ENCODE measurements at regions of chr6 and their contacts with region 1.

Region 1: GRCh38 chr6:149235130-149235561 is 82.4 kb upstream of the TAB2 start:
- DNase-seq: no peak
- H3K4me3 Mint-ChIP-seq: no peak overlapping the region
- H3K27ac Mint-ChIP-seq: peak overlapping the region; percentile 99
- H3K4me1 Mint-ChIP-seq: peaks cover 60% of the 10 kb centered on the region
- H3K27me3 Mint-ChIP-seq: no peaks in the 10 kb centered on the region

Region 2: DNA sequence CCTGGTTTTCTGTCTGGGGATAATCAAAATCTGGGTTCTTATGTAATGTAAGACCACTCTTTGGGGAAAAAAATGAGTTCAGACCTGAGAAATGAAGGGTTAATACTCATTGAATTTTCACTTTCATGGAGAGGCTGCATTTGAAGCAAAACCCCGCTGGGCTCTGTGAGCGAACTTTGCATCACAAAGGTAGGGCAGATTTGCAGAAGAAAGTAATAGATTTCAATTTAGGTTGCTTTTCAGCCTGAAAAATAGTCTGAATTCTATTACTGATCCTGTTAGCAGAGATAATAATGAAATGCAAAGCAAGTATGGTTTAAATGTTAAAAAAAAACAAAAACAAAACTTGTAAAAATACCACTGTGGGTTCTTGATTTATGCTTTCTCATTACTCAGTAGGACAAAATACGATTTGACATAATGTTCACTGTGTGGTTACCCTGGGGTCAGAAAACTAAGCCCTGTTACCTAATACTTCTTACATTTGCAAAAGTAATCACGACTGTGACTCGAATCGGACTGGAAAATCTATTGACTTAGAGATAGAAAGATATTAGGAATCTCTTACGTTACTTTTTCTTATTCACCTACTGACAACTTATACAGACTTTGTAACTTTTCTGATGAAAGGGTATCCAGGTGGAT is 416.1 kb before region 1 on chr6:
- intact Hi-C with region 1: no loop called
- DNase-seq: no peak
- H3K4me3 Mint-ChIP-seq: no peak overlapping the region
- H3K27ac Mint-ChIP-seq: no peak overlapping the region
- H3K4me1 Mint-ChIP-seq: no peaks in the 10 kb centered on the region
- H3K27me3 Mint-ChIP-seq: peaks cover 25% of the 10 kb centered on the region

Region 3: GRCh38 chr6:149094156-149094555 is 141.0 kb before region 1 on chr6:
- intact Hi-C with region 1: loop called (anchors 1 kb)
- DNase-seq: no peak
- H3K4me3 Mint-ChIP-seq: peak overlapping the region; percentile 50
- H3K27ac Mint-ChIP-seq: peak overlapping the region; percentile 84
- H3K4me1 Mint-ChIP-seq: peaks cover 63% of the 10 kb centered on the region
- H3K27me3 Mint-ChIP-seq: no peaks in the 10 kb centered on the region

Region 4: DNA sequence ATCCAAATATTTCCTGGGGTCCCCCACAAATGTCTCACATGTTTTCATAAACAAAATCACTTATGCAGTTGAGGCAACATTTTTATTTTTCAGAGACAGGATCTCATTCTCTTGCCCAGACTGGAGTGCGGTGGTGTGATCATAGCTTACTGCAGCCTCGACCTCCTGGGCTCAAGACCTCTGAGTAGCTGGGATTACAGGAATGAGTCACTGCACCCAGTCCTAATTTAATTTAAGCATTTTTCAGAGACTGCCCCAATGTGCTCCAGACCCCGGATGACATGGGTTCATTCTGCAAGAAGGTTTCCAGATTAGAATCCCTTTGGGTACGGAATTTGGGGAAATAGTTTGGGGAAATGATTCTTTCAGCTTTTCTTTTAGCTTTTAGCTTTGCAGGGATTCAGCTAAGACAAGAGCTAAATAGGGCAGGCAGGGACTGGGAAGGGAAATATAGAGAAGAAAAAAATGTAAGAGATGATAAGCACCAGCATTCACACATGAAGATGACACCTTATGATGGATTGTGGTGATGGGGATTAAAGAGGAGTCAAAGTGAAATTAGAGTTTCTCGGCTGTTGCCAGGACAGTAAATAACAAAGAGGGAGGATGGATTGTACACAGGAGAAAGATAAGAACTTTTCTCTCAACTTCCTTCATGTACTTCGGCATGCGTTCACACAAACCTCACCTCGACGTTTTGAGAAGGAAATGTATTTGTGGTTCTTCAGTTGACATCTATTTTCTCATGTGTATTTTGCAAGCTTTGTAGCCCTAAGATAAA is 87.0 kb before region 1 on chr6:
- intact Hi-C with region 1: loop called (anchors 1 kb)
- DNase-seq: peak; percentile 41
- H3K4me3 Mint-ChIP-seq: peak overlapping the region; percentile 31
- H3K27ac Mint-ChIP-seq: peak overlapping the region; percentile 97
- H3K4me1 Mint-ChIP-seq: peaks cover 73% of the 10 kb centered on the region
- H3K27me3 Mint-ChIP-seq: no peaks in the 10 kb centered on the region

Region 5: GRCh38 chr6:149271348-149272340 is 36.5 kb after region 1 on chr6:
- intact Hi-C with region 1: loop called (anchors 1 kb)
- DNase-seq: no peak
- H3K4me3 Mint-ChIP-seq: peak overlapping the region; percentile 58
- H3K27ac Mint-ChIP-seq: peak overlapping the region; percentile 83
- H3K4me1 Mint-ChIP-seq: peaks cover 39% of the 10 kb centered on the region
- H3K27me3 Mint-ChIP-seq: no peaks in the 10 kb centered on the region

Region 6: GRCh38 chr6:149366267-149366921 is 131.2 kb after region 1 on chr6:
- intact Hi-C with region 1: loop called (anchors 2 kb)
- DNase-seq: no peak
- H3K4me3 Mint-ChIP-seq: peak overlapping the region; percentile 20
- H3K27ac Mint-ChIP-seq: no peak overlapping the region
- H3K4me1 Mint-ChIP-seq: peaks cover 47% of the 10 kb centered on the region
- H3K27me3 Mint-ChIP-seq: no peaks in the 10 kb centered on the region

Region 7: DNA sequence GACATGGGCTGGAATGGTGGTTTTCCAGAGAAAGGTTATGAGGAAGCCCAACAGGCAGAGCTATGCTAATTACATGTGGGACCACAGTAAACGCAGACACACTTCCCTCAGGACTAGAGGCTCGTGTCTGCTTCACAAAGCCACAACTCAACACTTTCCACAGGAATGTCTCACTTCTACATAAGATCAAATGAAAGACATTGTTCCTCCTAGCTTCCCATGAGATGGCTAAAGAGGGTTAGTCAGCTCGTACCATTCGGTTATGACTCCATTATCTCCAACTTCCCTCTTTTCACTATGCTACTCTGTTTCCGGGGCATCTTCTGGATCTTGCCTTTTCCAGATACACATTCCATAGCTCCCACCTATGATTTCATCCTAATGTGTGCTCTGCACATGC is 278.8 kb after region 1 on chr6:
- intact Hi-C with region 1: loop called (anchors 5 kb)
- DNase-seq: no peak
- H3K4me3 Mint-ChIP-seq: no peak overlapping the region
- H3K27ac Mint-ChIP-seq: no peak overlapping the region
- H3K4me1 Mint-ChIP-seq: peaks cover 39% of the 10 kb centered on the region
- H3K27me3 Mint-ChIP-seq: no peaks in the 10 kb centered on the region

Measured in activated T-helper 2 cell treated with anti-CD3 and anti-CD28 coated beads, Interferon-gamma antibody, Interleukin-2, Interleukin-4, amounts not matched to agents 10 μg/mL and 5 μg/mL and 100 μg/mL, durations not matched to agents 14 hours and 24 hours and 36 hours (primary cell).